Cardiac septum (tissue), 1 donor: ENCODE measurements at regions of chr2 and their contacts with region 1.

Region 1: GRCh38 chr2:101518578-101519492 is 43.9 kb upstream of the RFX8 start:
- DNase-seq: no peak

Region 2: GRCh38 chr2:101341901-101342624 is 176.8 kb before region 1 on chr2:
- intact Hi-C with region 1: loop called (anchors 10 kb)
- DNase-seq: peak; percentile 91

Region 3: DNA sequence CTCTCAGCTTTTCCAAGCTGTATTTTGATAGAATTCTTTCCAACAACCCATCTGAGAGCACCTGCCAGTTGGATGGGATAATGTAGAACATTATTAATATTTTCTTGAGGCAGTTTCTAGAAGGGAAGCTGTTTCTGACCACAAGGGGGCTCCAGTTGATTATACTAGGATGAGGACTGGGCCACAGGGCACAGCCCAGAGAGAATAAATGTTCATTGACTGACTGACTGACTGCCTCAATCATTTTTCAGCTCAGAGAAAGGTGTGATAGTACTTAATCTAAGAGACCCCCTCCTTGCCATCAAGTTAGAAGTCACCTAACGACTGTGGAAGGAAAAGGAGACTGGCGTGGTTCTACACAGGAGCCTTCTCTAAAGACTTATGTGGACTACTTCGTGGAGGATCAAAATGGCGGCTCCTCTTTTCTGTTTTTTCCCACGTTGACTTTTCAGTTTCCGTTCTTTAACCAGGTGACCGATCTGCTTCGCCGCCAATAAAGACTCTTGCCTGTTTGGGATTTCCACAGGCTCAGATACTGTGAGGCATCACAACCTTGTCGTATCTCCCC is 99.7 kb before region 1 on chr2:
- intact Hi-C with region 1: loop called (anchors 2 kb)
- DNase-seq: no peak

Region 4: GRCh38 chr2:101473911-101474701 is 44.7 kb before region 1 on chr2:
- intact Hi-C with region 1: loop called (anchors 2 kb)
- DNase-seq: peak; percentile 89

Region 5: GRCh38 chr2:101558740-101559519 is 40.1 kb after region 1 on chr2:
- intact Hi-C with region 1: loop called (anchors 5 kb)
- DNase-seq: no peak

Region 6: DNA sequence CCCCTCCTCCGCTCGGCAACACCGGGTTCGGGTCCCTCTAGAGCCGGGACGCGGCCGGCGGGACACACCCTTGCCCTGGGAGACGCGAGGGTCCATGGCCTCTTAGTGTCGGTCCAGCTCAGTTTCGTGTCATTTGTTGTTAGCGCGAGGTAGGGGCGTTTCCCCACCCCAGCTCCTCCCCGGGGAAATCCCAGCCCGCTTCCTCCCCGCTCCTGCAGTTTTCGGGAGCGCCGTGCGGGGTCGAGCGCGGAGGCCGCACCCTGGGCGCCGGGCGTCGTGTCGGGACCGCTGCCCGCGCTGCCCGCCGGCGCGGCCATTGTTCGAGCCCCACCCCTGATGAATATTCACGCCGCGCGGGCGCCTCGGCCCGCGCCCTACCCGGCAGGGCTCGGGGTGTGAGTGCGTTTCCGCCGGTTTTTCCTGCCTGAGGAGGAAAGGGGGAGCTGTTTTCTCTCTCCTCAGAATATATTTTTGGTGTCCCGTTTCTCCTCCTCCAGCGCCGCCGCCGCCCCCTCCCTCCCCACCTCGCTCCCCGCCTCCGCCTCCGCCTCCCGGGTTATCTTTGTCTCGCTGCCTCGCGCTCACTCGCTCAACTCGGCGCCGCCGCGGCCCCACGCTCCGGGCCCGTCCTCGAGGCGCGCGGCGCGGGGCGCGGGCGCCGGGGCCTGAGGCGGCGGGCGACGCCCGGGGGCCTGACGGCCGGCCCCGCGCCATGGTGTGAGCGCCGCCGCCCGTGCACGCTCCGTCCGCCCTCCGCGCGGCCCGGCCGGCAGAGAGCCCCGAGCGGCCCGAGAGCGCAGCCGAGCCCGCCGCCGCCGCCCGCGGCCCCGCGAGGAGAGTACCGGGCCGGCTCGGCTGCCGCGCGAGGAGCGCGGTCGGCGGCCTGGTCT is 178.5 kb after region 1 on chr2 and contains the start of gene MAP4K4:
- intact Hi-C with region 1: loop called (anchors 2 kb)
- DNase-seq: peak; percentile 96
- total RNA-seq, gene MAP4K4: 135 TPM

Region 7: DNA sequence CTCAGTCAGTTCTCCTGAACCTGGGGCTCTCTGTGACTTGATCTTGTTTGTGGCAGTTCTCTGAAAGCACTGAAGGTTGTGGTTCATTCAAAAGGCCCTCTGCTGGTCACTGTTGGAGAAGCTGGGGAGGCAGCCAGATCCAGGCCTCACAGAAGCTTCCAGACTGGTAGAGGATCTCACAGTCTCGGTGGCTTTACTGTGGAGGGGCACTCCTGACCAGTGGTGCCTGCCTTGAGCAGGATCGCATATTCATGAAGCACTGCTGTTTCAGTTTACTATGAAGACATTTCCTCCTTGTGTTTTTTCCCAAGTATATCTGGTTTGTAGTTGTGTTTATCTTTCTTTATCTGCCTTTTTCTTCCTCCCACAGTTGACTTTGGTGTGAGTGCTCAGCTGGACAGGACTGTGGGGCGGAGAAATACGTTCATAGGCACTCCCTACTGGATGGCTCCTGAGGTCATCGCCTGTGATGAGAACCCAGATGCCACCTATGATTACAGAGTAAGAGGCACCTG is 312.6 kb after region 1 on chr2:
- intact Hi-C with region 1: loop called (anchors 1 kb)
- DNase-seq: peak; percentile 82